CD8-positive, alpha-beta T cell (primary cell): ENCODE measurements at regions of chr19 and their contacts with region 1.

Region 1: DNA sequence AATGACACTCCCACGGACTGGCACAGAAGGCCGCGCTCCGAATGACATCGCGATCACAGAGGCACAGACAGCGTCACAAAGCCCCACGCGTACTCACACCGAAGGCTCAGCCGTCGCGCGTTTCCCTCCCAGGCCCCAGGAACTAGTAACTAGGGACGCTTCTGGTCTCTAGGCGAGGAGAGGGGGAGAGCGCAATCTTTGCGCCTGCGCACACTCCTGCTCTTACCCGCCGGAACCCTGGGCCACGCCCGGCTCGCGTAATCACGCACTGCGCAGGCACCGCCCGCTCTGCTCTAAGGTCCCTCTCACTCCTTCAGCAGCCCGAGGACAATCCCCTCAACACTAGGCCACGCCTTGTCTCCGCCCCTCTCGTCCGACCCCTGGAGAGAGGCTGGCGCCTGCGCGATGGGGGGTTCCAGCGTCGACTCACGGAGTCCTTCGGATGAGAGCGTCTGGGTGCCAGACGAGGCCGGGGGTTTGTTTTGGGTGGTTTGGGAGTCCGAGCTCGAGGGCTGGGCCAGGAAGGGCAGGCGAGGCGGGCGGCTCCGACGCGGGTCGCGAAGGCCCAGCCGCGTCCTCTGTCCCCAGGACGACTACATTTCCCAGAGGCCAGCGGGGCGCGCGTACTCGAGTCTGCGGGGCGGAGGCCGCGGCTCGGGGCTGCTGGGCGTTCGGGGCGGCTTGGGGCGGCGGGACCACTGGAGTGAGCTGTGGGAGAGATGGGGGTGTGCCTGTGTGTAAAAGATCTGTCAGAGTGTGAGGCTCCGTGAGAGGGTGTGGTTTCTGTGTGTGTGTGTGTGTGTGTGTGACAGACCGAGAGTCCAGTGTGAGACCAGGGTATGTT is at the start of gene ZNF471:
- DNase-seq: peak; percentile 62 to 96 (median 79)
- ATAC-seq: peak; percentile 98
- H3K4me3 ChIP-seq: peak within 1 kb of the TSS; percentile 39 to 73
- H3K4me3 Mint-ChIP-seq: no peak within 1 kb of the TSS
- H3K27ac ChIP-seq: peak within 1 kb of the TSS; percentile 76
- H3K27ac Mint-ChIP-seq: no peak within 1 kb of the TSS
- H3K4me1 ChIP-seq: peaks cover 8% of the 10 kb centered on the region
- H3K4me1 Mint-ChIP-seq: peaks cover 9% of the 10 kb centered on the region
- H3K27me3 ChIP-seq: peaks cover 0 to 3% of the 10 kb centered on the region in 2 experiments
- H3K27me3 Mint-ChIP-seq: peaks cover 3% of the 10 kb centered on the region
- CTCF ChIP-seq: no peak
- total RNA-seq, gene ZNF471: 0.67 to 0.71 TPM

Region 2: DNA sequence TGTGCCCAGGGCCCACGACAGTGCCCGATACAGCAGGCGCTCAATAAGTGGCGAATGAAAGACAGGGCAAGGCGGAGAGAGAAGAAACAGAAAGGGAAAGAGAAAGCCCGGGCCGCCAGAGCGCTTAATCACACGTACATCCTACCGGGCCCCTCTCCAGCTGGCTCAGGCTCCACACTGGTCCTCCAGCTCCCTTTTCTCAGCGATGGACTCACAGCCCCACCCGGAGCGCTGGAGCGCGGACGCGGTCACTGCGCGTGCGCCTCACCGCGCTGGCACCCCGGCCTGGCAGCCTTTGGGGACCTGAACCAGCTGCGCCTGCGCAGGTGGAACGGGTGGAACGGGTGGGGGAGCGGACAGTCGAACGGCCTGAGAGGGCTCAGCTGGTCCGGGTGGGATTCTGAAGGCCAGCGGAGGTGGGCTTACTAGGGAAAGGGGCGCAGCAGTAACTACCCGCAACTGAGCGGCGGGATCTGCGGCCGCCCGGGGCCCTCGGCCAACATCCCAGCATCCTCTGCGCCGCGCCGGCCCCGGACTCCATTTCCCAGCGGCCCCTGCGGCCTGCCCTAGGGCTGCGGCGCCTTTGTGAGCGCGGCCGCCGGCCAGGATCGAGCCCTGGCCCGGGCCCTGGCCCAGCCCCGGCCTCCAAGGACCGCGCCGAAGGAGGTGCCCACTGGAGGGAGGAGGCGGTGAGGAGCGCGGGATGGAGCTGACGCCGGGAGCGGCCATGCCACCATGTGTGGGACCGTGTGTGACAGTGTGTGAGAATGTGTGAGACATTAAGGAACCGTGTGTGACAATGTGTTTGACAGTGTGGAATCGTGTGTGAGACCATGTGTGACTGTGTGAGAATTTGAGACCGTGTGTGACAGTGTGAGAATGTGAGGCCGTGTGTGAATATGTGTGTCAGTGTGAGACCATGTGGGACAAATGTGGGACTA is 103.6 kb before region 1 on chr19 and contains the start of gene ZNF583:
- CTCF ChIA-PET with region 1: no interaction called
- POLR2A ChIA-PET with region 1: no interaction called
- intact Hi-C with region 1: loop called in 1 of 2 experiments (anchors 1 kb)
- DNase-seq: peak; percentile 83 to 95 (median 91)
- ATAC-seq: peak; percentile 82
- H3K4me3 ChIP-seq: peak within 1 kb of the TSS; percentile 80 to 93
- H3K4me3 Mint-ChIP-seq: peak within 1 kb of the TSS; percentile 85
- H3K27ac ChIP-seq: peak within 1 kb of the TSS; percentile 83 to 99
- H3K27ac Mint-ChIP-seq: peak within 1 kb of the TSS; percentile 88
- H3K4me1 ChIP-seq: peaks cover 18% of the 10 kb centered on the region
- H3K4me1 Mint-ChIP-seq: peaks cover 32% of the 10 kb centered on the region
- H3K27me3 ChIP-seq: no peaks in the 10 kb centered on the region
- H3K27me3 Mint-ChIP-seq: no peaks in the 10 kb centered on the region
- CTCF ChIP-seq: no peak
- total RNA-seq, gene ZNF583: 1.3 to 2.4 TPM

Region 3: DNA sequence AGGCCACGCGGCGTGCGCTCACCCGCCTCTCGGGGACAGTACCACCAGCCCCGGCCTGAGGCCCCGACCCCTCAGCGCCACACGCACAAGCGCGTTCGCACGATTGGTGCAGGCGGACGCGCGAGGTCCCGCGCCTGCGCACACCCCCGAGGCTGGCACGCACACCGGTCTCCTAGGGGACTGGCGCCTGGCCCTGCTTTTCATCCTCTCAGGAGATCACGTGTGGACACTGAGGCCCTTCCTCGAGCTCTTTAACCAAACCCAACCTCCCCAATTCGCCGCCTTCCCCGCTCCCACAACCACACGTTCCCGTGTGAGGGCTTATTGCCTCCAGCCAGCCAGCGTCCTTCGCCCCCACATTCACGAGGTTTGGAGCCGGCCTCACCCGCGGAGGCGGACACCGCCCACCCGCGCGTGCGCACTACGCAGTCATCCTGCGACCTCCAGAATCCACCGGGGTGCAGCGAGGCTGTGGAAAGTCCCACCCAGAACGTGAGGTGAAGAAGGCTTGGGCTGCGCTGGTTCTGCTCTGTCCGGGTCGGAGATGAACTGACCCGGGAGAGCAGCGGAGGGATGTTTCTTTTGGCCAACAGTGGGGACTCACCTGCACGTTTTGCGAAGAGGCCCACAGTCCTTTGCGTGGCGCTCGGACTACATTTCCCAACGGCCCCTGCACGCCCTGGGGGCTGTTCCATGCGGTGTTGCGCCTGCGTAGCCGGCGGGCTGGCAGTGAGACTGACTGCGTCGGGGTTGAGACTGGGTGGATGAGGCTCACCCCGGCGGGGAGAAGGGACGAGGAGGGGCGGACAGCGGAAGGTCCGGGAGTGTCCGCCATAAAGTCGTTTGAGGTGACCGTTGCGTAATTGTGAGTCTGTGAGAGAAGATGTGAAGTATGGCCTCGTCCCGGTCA is 30.0 kb before region 1 on chr19:
- CTCF ChIA-PET with region 1: no interaction called
- POLR2A ChIA-PET with region 1: no interaction called
- intact Hi-C with region 1: loop called (anchors 1 to 2 kb)
- DNase-seq: peak; percentile 21 to 84 (median 63)
- ATAC-seq: peak; percentile 66
- H3K4me3 ChIP-seq: peak overlapping the region; percentile 23 to 67
- H3K4me3 Mint-ChIP-seq: peak overlapping the region; percentile 96
- H3K27ac ChIP-seq: peak overlapping the region; percentile 56 to 84
- H3K27ac Mint-ChIP-seq: peak overlapping the region; percentile 95
- H3K4me1 ChIP-seq: no peaks in the 10 kb centered on the region
- H3K4me1 Mint-ChIP-seq: peaks cover 18% of the 10 kb centered on the region
- H3K27me3 ChIP-seq: no peaks in the 10 kb centered on the region
- H3K27me3 Mint-ChIP-seq: peaks cover 19% of the 10 kb centered on the region
- CTCF ChIP-seq: no peak

Region 4: GRCh38 chr19:56594783-56595547 is 87.3 kb after region 1 on chr19 and contains the start of gene ZNF71:
- CTCF ChIA-PET with region 1: no interaction called
- POLR2A ChIA-PET with region 1: no interaction called
- intact Hi-C with region 1: loop called in 1 of 2 experiments (anchors 1 kb)
- DNase-seq: peak; percentile 72 to 91 (median 87)
- ATAC-seq: peak; percentile 96
- H3K4me3 ChIP-seq: peak within 1 kb of the TSS; percentile 45 to 72
- H3K4me3 Mint-ChIP-seq: peak within 1 kb of the TSS; percentile 91
- H3K27ac ChIP-seq: peak within 1 kb of the TSS; percentile 58 to 65
- H3K27ac Mint-ChIP-seq: peak within 1 kb of the TSS; percentile 91
- H3K4me1 ChIP-seq: peaks cover 18% of the 10 kb centered on the region
- H3K4me1 Mint-ChIP-seq: peaks cover 19% of the 10 kb centered on the region
- H3K27me3 ChIP-seq: no peaks in the 10 kb centered on the region
- H3K27me3 Mint-ChIP-seq: no peaks in the 10 kb centered on the region
- CTCF ChIP-seq: no peak
- total RNA-seq, gene ZNF71: 2.4 to 2.8 TPM

Region 5: GRCh38 chr19:56671613-56671994 is 163.9 kb after region 1 on chr19 and contains the start of gene ZNF835:
- CTCF ChIA-PET with region 1: no interaction called
- POLR2A ChIA-PET with region 1: no interaction called
- intact Hi-C with region 1: loop called in 1 of 2 experiments (anchors 2 kb)
- DNase-seq: peak; percentile 46 to 86 (median 79)
- ATAC-seq: peak; percentile 92
- H3K4me3 ChIP-seq: peak within 1 kb of the TSS; percentile 29 to 66
- H3K4me3 Mint-ChIP-seq: peak within 1 kb of the TSS; percentile 90
- H3K27ac ChIP-seq: peak within 1 kb of the TSS in 1 of 2 experiments; percentile 30
- H3K27ac Mint-ChIP-seq: peak within 1 kb of the TSS; percentile 67
- H3K4me1 ChIP-seq: peaks cover 11% of the 10 kb centered on the region
- H3K4me1 Mint-ChIP-seq: peaks cover 12% of the 10 kb centered on the region
- H3K27me3 ChIP-seq: no peaks in the 10 kb centered on the region
- H3K27me3 Mint-ChIP-seq: no peaks in the 10 kb centered on the region
- CTCF ChIP-seq: no peak
- total RNA-seq, gene ZNF835: 0.46 to 0.75 TPM